CD14-positive monocyte (primary cell): ENCODE measurements at regions of chr6 and their contacts with region 1.

Region 1: DNA sequence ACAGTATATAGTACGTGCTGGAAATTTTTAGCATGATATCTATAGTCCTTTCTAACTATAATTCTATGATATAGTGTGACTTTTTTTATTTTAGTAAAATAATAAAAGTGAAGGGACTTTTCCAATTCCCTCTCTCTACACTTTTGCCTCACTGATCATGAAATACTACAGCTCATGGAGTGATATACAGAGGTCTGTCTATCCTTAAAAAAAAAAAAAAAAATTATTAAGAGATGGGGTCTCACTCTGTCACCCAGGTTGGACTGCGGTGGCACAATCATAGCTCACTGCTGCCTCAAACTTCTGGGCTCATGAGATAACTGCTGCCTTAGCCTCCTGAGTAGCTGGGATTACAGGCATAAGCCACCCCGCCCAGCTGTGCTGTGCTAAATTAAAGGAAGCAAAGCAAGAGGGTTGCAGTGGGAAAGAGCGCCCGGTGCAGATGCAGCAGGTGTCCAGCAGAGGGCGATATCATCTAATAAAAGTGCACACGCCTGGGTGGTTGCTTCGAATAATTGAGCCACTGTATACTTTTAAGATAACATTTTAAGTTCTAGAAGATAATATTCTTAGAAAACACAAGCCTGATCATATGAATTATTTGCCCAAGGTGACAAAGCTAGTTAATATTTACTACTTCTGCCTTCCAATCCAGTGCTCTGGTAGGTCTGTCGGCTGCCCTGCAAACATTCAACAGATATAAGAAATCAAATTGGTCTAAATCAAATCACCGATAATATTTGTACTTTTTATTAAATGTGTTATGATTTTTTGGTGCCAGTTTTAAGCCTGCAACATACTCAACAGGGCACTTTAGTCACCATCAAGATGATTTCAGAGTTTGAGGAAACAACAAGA is 94.9 kb upstream of the NT5E start:
- DNase-seq: peak; percentile 11 to 36 (median 24)
- H3K4me3 ChIP-seq: no peak overlapping the region
- H3K4me3 Mint-ChIP-seq: no peak overlapping the region
- H3K27ac ChIP-seq: no peak overlapping the region
- H3K27ac Mint-ChIP-seq: no peak overlapping the region
- H3K4me1 ChIP-seq: no peaks in the 10 kb centered on the region
- H3K4me1 Mint-ChIP-seq: no peaks in the 10 kb centered on the region
- H3K27me3 ChIP-seq: no peaks in the 10 kb centered on the region
- H3K27me3 Mint-ChIP-seq: peaks cover 0 to 12% (median 3%) of the 10 kb centered on the region in 3 donors
- CTCF ChIP-seq: peak; percentile 99

Region 2: DNA sequence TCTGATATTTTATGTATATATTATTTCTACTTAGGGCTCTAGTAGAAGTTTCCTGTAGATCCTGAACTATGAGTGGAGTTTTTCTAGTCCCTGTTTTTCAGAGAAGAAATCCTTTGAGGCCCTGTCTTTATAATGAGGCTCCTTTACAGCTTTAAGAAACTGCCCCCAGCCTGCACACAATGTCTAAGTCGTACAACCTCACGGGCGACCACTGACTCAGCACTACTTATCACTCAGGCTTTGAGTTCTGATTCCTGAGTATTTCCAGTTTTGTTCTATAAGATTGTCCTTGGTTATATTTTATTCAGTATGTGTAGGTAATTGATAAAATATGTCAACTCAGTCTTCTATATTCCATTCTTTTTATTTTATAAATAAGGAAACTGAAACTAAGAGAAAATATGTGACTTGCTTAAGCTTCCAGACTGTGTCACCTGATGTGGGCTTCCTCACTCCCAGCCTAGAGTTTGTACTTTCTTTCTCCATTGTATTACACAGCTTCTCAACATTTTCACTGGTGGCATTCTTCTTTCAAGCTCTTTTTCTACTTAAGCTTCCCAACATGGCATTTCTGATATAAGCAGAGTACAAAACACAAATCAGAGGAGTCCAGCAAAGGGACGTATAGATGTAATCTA is 757.6 kb before region 1 on chr6:
- intact Hi-C with region 1: no loop called
- DNase-seq: no peak
- H3K4me3 ChIP-seq: no peak overlapping the region
- H3K4me3 Mint-ChIP-seq: no peak overlapping the region
- H3K27ac ChIP-seq: no peak overlapping the region
- H3K27ac Mint-ChIP-seq: no peak overlapping the region
- H3K4me1 ChIP-seq: no peaks in the 10 kb centered on the region
- H3K4me1 Mint-ChIP-seq: no peaks in the 10 kb centered on the region
- H3K27me3 ChIP-seq: no peaks in the 10 kb centered on the region
- H3K27me3 Mint-ChIP-seq: peaks cover 0 to 1% (median 0%) of the 10 kb centered on the region in 3 donors
- CTCF ChIP-seq: no peak

Region 3: GRCh38 chr6:85278466-85279035 is 76.4 kb before region 1 on chr6:
- intact Hi-C with region 1: no loop called
- DNase-seq: no peak
- H3K4me3 ChIP-seq: no peak overlapping the region
- H3K4me3 Mint-ChIP-seq: no peak overlapping the region
- H3K27ac ChIP-seq: no peak overlapping the region
- H3K27ac Mint-ChIP-seq: no peak overlapping the region
- H3K4me1 ChIP-seq: no peaks in the 10 kb centered on the region
- H3K4me1 Mint-ChIP-seq: no peaks in the 10 kb centered on the region
- H3K27me3 ChIP-seq: no peaks in the 10 kb centered on the region
- H3K27me3 Mint-ChIP-seq: no peaks in the 10 kb centered on the region
- CTCF ChIP-seq: no peak

Region 4: DNA sequence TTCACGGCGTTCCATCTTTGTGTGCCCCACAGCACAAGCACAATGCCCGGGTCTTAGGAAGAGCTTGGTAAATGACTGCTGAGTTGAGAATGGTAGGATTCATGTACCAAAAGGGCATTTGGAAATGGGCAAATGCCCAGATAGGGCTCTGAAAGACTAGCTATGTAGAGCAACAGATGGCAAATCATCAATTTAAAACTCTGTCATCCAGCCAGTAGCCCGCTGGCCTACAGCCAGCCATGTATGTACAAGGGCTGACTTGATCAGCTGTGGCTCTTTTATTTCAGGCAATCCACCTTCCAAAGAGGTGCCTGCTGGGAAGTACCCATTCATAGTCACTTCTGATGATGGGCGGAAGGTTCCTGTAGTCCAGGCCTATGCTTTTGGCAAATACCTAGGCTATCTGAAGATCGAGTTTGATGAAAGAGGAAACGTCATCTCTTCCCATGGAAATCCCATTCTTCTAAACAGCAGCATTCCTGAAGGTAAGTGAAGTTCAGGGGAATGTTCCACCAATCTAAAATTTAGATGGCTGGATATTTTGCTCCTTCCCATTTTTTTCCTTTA is 130.0 kb after region 1 on chr6:
- intact Hi-C with region 1: loop called in 1 of 2 experiments (anchors 5 kb)
- DNase-seq: no peak
- H3K4me3 ChIP-seq: no peak overlapping the region
- H3K4me3 Mint-ChIP-seq: no peak overlapping the region
- H3K27ac ChIP-seq: no peak overlapping the region
- H3K27ac Mint-ChIP-seq: no peak overlapping the region
- H3K4me1 ChIP-seq: no peaks in the 10 kb centered on the region
- H3K4me1 Mint-ChIP-seq: peaks cover 2% of the 10 kb centered on the region
- H3K27me3 ChIP-seq: no peaks in the 10 kb centered on the region
- H3K27me3 Mint-ChIP-seq: peaks cover 5 to 7% (median 7%) of the 10 kb centered on the region in 3 donors
- CTCF ChIP-seq: no peak

Region 5: DNA sequence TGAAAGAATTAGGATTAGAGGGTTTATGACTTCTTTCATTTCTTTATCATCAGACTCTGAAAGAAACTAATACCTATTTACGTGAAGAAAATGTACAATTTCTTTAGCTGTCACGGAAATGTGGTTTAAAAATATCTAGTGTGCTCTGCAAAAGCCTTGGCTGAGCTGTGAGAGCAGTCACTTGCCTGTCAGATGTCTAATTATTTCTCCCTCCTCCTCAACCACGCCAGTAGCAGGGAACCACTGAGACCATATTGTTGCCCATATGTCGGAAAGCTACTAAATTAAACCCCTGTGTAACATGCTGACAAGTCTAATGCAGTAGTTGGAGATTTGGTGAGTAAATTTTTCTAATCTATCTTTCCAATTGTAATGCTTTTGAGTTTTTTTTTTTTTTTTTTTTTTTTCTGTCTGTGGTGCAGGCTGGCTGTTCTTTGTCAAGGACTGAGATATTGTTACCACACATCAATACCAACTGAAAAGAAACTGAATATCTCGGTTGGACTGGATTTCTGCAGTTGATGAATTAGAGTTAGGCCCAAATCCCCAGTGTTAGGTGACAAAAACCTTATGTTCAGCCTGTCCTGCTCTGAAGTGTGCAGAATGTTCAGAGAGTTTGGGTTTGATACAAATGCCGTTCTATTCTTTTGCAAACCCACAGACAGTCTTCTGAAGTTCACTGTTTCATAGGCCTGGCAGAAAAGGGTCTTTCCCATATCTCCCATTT is 590.6 kb after region 1 on chr6:
- intact Hi-C with region 1: no loop called
- DNase-seq: no peak
- H3K4me3 ChIP-seq: no peak overlapping the region
- H3K4me3 Mint-ChIP-seq: no peak overlapping the region
- H3K27ac ChIP-seq: no peak overlapping the region
- H3K27ac Mint-ChIP-seq: no peak overlapping the region
- H3K4me1 ChIP-seq: no peaks in the 10 kb centered on the region
- H3K4me1 Mint-ChIP-seq: no peaks in the 10 kb centered on the region
- H3K27me3 ChIP-seq: no peaks in the 10 kb centered on the region
- H3K27me3 Mint-ChIP-seq: peaks cover 0 to 1% (median 0%) of the 10 kb centered on the region in 3 donors
- CTCF ChIP-seq: no peak